GM12878 (cell line): ENCODE measurements at regions of chr13 and their contacts with region 1.

Region 1: GRCh38 chr13:77480066-77480465 is 55.4 kb upstream of the SCEL start:
- DNase-seq: no peak
- ATAC-seq: no peak
- H3K4me3 ChIP-seq: no peak overlapping the region
- H3K27ac ChIP-seq: no peak overlapping the region
- H3K4me1 ChIP-seq: peaks cover 6% of the 10 kb centered on the region
- H3K27me3 ChIP-seq: no peaks in the 10 kb centered on the region
- CTCF ChIP-seq: no peak
- EP300 ChIP-seq: no peak
- POLR2A ChIP-seq: no peak
- RAD21 ChIP-seq: no peak

Region 2: DNA sequence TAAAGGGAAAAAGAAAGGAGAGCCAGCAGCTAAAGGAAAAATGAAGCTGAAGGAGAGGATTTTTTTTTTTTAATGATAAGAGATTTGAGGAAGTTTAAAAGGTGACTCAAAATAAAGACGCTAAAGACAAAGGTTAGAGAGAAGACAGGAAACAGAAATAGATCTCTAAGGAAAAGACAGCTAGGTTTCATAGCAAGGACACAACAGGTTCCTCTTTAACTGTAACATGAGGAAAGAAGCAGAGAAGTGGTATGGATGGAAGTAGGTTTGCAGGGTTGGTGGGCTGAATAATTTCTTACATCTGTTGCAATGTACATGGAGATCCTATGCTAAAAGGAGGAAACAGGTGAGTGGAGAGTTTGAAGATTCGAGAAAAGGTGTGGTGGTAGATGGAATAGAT is 260.7 kb before region 1 on chr13:
- CTCF ChIA-PET with region 1: interaction called, 21 read pairs
- POLR2A ChIA-PET with region 1: no interaction called
- RAD21 ChIA-PET with region 1: interaction called, 9 read pairs
- SMC1A ChIA-PET with region 1: interaction called, 29 read pairs
- in situ Hi-C with region 1: no loop called
- intact Hi-C with region 1: no loop called
- DNase-seq: no peak
- ATAC-seq: no peak
- H3K4me3 ChIP-seq: no peak overlapping the region
- H3K27ac ChIP-seq: no peak overlapping the region
- H3K4me1 ChIP-seq: no peaks in the 10 kb centered on the region
- H3K27me3 ChIP-seq: no peaks in the 10 kb centered on the region
- CTCF ChIP-seq: no peak
- EP300 ChIP-seq: no peak
- POLR2A ChIP-seq: no peak
- RAD21 ChIP-seq: no peak

Region 3: GRCh38 chr13:77285098-77285497 is 195.0 kb before region 1 on chr13:
- CTCF ChIA-PET with region 1: interaction called, 12 read pairs
- POLR2A ChIA-PET with region 1: no interaction called
- RAD21 ChIA-PET with region 1: interaction called, 10 read pairs
- SMC1A ChIA-PET with region 1: interaction called, 12 read pairs
- in situ Hi-C with region 1: no loop called
- intact Hi-C with region 1: no loop called
- DNase-seq: no peak
- ATAC-seq: no peak
- H3K4me3 ChIP-seq: no peak overlapping the region
- H3K27ac ChIP-seq: no peak overlapping the region
- H3K4me1 ChIP-seq: no peaks in the 10 kb centered on the region
- H3K27me3 ChIP-seq: no peaks in the 10 kb centered on the region
- CTCF ChIP-seq: no peak
- EP300 ChIP-seq: no peak
- POLR2A ChIP-seq: no peak
- RAD21 ChIP-seq: no peak

Region 4: DNA sequence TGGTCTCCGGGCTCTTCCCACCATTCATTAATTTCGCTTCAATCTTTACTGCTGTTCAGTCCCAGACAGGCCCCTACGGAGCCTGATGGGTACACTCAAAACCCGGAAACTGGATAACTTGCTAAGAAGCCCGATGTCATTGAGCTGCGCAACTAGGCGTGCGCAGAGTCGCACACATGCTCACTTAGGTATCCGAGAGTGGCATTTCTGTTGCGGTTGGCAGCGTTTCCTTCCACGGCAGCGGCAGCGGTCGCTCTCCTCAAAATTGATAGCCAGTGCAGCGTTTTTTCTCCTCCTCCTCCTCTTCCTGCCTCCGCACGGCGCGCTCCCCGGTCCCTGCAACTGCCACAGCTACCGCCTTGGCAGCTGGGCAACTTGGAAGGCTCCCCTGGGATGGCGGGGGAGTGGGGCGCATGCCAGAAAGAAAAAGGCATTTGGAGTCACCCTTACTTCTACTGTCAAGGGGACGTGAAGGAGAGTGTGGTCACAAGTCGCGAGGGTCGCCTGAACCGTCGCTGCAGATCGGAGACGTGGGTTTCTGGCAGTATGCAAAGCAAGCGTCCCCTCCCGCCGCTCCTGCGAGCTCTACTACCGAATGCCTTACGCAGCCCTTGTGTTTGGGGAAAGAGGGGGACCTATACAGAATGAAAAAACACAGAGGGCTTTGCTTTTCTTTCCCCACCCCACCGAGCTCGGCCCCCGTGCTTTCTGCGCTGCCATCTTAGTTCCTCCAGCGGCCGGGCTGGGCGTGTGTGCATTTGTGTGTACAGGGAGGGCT is 150.7 kb before region 1 on chr13:
- CTCF ChIA-PET with region 1: interaction called, 80 read pairs
- POLR2A ChIA-PET with region 1: interaction called, 10 read pairs
- RAD21 ChIA-PET with region 1: interaction called, 135 read pairs
- SMC1A ChIA-PET with region 1: interaction called, 113 read pairs
- in situ Hi-C with region 1: no loop called
- intact Hi-C with region 1: loop called (anchors 1 kb)
- DNase-seq: peak; percentile 98
- ATAC-seq: peak; percentile 76
- H3K4me3 ChIP-seq: peak overlapping the region; percentile 76
- H3K27ac ChIP-seq: peak overlapping the region; percentile 98
- H3K4me1 ChIP-seq: peaks cover 16% of the 10 kb centered on the region; the same call in 1 of the 2 replicates
- H3K27me3 ChIP-seq: no peaks in the 10 kb centered on the region
- CTCF ChIP-seq: 0 out of 6 replicates have a peak, but pooled peaks of 2 of the 3 experiments have one; percentile 2
- EP300 ChIP-seq: peak; percentile 43 to 86; a peak in 3 of 4 replicates
- POLR2A ChIP-seq: peak; percentile 86
- RAD21 ChIP-seq: peak; percentile 25; the same call in 1 of the 2 replicates

Region 5: DNA sequence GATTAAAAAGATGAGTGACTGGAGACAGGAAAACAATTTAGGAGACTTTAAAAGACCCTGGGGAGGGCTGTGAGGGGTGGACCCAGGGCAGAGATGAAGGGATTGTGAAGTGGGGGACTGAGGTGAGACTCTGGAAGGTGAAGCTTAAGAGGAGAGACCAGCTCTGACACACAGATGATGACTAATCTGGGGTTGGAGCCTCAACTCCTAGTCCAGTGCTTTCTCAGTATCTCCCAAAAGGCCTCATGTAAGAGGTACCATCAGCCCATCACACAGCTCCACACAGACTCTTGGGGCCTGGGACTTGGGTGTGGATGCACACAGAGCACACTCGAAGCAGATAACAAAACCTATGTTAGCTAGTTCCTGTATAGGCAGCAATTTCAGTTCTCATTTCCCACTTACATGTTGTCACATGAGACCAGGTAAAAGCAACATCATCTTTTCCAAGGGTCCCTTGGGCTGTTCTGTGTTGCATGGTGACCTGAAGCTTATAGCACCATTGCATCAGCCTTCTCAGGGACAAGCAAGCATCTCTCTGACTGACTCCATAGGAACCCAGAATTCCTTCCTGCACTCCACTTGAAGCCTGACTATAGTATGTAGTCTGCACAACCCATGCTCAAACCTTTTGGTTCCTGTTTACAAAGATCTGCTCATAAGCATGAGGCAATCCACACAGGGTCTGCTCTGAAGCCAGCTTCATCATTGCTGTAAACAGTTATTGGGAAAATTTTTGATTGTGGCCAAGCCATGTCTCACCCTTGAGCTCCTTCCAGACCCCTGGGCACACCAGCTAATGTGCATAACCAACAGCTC is 64.6 kb before region 1 on chr13:
- CTCF ChIA-PET with region 1: interaction called, 24 read pairs
- POLR2A ChIA-PET with region 1: interaction called, 9 read pairs
- RAD21 ChIA-PET with region 1: interaction called, 22 read pairs
- SMC1A ChIA-PET with region 1: interaction called, 27 read pairs
- in situ Hi-C with region 1: no loop called
- intact Hi-C with region 1: no loop called
- DNase-seq: peak; percentile 45
- ATAC-seq: peak; percentile 93
- H3K4me3 ChIP-seq: no peak overlapping the region
- H3K27ac ChIP-seq: peak overlapping the region; percentile 26; the same call in 1 of the 2 replicates
- H3K4me1 ChIP-seq: peaks cover 10% of the 10 kb centered on the region
- H3K27me3 ChIP-seq: no peaks in the 10 kb centered on the region
- CTCF ChIP-seq: no peak
- EP300 ChIP-seq: no peak
- POLR2A ChIP-seq: 0 out of 2 replicates have a peak, but pooled peaks have one; percentile 32
- RAD21 ChIP-seq: 0 out of 2 replicates have a peak, but pooled peaks have one; percentile 17

Region 6: DNA sequence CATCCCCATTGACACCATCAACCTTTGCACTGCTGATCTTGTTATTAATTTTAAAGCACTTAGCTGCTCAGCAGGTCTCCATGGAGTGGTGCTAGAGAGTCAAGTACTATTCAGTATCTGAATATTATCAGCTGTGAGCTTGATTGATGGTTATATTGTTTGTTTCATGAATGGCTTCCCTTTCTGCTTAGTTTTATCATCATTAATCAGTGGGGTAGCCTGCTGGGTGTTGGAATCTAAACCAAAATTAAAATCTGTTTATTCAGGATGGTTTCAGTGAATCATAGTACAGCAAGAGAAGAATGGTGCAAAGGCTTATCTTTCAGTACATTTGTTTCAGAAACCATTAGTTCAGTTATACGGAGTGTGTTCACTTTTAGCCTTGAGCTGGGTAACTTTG is 12.9 kb after region 1 on chr13:
- CTCF ChIA-PET with region 1: interaction called, 36 read pairs
- POLR2A ChIA-PET with region 1: no interaction called
- RAD21 ChIA-PET with region 1: interaction called, 14 read pairs
- SMC1A ChIA-PET with region 1: interaction called, 55 read pairs
- in situ Hi-C with region 1: no loop called
- intact Hi-C with region 1: no loop called
- DNase-seq: no peak
- ATAC-seq: peak; percentile 95
- H3K4me3 ChIP-seq: no peak overlapping the region
- H3K27ac ChIP-seq: no peak overlapping the region
- H3K4me1 ChIP-seq: peaks cover 8% of the 10 kb centered on the region; the same call in 1 of the 2 replicates
- H3K27me3 ChIP-seq: no peaks in the 10 kb centered on the region
- CTCF ChIP-seq: peak; percentile 68 to 81 (median 75); a peak in 5 of 6 replicates
- EP300 ChIP-seq: no peak
- POLR2A ChIP-seq: no peak
- RAD21 ChIP-seq: peak; percentile 88

Region 7: GRCh38 chr13:77599351-77599750 is 119.3 kb after region 1 on chr13:
- CTCF ChIA-PET with region 1: no interaction called
- POLR2A ChIA-PET with region 1: no interaction called
- RAD21 ChIA-PET with region 1: no interaction called
- SMC1A ChIA-PET with region 1: no interaction called
- in situ Hi-C with region 1: no loop called
- intact Hi-C with region 1: no loop called
- DNase-seq: no peak
- ATAC-seq: no peak
- H3K4me3 ChIP-seq: no peak overlapping the region
- H3K27ac ChIP-seq: no peak overlapping the region
- H3K4me1 ChIP-seq: no peaks in the 10 kb centered on the region
- H3K27me3 ChIP-seq: peaks cover 0 to 7% of the 10 kb centered on the region in 2 experiments; a peak in 2 of 4 replicates
- CTCF ChIP-seq: no peak
- EP300 ChIP-seq: no peak
- POLR2A ChIP-seq: no peak
- RAD21 ChIP-seq: no peak